ENCODE measurements at regions of chr10 and their contacts with region 1.

Region 1: GRCh38 chr10:25725918-25726716 is 207.9 kb upstream of the MYO3A start:
- DNase-seq: peak; percentile 33
- ATAC-seq: peak; percentile 76
- H3K4me3 ChIP-seq: no peak overlapping the region
- H3K27ac ChIP-seq: no peak overlapping the region
- H3K4me1 ChIP-seq: no peaks in the 10 kb centered on the region
- H3K27me3 ChIP-seq: no peaks in the 10 kb centered on the region
- CTCF ChIP-seq: peak; percentile 67

Region 2: DNA sequence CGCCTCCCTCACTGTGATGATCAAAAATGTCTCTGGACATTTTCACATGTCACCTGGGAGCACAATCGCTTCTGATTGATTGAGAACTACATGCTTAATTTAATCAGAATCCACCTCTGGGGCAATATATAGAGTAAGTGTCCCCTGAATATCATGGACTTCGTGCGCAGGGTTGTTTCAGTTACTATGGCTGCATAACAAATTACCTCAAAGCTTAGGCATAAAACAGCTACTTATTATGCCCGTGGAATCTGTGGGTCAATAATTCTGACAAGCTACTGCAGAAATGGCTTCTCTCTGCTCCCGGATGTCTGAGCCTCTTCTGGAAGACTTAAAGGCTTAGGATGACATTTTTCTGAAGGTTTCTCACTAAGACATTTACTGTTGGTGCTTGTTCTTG is 217.0 kb before region 1 on chr10:
- CTCF ChIA-PET with region 1: no interaction called
- POLR2A ChIA-PET with region 1: no interaction called
- in situ Hi-C with region 1: no loop called
- intact Hi-C with region 1: no loop called
- DNase-seq: no peak
- ATAC-seq: no peak
- H3K4me3 ChIP-seq: no peak overlapping the region
- H3K27ac ChIP-seq: no peak overlapping the region
- H3K4me1 ChIP-seq: no peaks in the 10 kb centered on the region
- H3K27me3 ChIP-seq: no peaks in the 10 kb centered on the region
- CTCF ChIP-seq: no peak

Region 3: DNA sequence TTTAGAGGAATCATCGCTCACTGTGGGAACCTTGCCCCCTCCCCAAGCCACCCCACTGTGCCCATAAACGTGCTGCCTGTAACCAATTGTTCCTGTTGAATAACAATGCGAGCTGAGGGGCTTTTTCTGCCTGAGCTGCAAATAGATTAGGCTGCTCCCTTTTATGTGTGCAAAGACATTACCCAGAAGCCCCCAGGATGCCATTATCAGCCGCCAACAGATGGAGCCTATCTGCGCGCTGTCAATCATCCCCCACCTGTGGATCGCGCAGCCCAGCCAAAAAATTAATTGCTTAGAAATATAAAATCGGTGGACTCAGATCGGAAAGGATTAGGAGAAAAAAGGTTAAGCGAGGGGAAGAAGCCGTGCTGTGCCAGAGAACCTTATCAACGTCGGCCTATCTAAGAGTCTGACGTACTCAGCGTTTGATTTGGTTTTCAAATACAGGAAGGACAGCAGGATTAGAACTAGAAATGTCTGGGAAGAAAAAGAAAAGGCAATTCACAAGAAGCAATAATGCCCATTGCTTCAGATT is 40.6 kb after region 1 on chr10:
- CTCF ChIA-PET with region 1: no interaction called
- POLR2A ChIA-PET with region 1: no interaction called
- in situ Hi-C with region 1: no loop called
- intact Hi-C with region 1: no loop called
- DNase-seq: no peak
- ATAC-seq: no peak
- H3K4me3 ChIP-seq: no peak overlapping the region
- H3K27ac ChIP-seq: no peak overlapping the region
- H3K4me1 ChIP-seq: no peaks in the 10 kb centered on the region
- H3K27me3 ChIP-seq: no peaks in the 10 kb centered on the region
- CTCF ChIP-seq: no peak

Region 4: DNA sequence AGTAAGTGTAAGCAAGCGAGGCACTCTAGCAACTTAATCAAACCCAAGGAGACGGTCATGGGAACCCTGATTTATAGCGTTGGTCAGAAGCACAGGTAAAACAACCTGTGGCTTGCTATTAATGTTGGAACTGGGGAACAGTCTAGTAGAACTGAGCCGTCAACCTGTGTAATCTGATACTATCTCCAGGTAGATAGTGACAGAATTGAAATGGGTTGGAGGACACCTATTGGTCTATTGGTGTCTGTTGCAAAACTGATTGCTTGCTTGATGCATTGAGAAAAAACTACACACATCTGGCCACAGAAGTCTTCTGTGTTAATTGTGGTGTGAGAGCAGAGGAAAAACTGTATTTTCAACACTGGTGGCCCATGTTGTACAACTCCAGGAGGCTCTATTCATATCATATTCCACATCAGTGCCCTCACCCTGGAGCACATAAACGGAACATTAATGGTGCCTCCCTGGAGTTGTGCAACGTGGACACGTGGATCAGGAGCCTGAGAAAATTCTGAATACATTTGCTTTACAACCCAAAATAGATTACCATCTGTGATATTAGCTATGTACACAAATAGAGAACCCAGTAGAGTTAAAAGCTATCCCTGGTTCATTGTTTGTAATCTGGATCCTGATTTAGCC is 320.1 kb after region 1 on chr10:
- CTCF ChIA-PET with region 1: no interaction called
- POLR2A ChIA-PET with region 1: no interaction called
- in situ Hi-C with region 1: no loop called
- intact Hi-C with region 1: no loop called
- DNase-seq: no peak
- ATAC-seq: no peak
- H3K4me3 ChIP-seq: no peak overlapping the region
- H3K27ac ChIP-seq: no peak overlapping the region
- H3K4me1 ChIP-seq: no peaks in the 10 kb centered on the region
- H3K27me3 ChIP-seq: no peaks in the 10 kb centered on the region
- CTCF ChIP-seq: no peak

Region 5: GRCh38 chr10:26269754-26270153 is 543.6 kb after region 1 on chr10:
- CTCF ChIA-PET with region 1: no interaction called
- POLR2A ChIA-PET with region 1: no interaction called
- in situ Hi-C with region 1: no loop called
- intact Hi-C with region 1: loop called (anchors 5 kb)
- DNase-seq: peak; percentile 13
- ATAC-seq: peak; percentile 77
- H3K4me3 ChIP-seq: no peak overlapping the region
- H3K27ac ChIP-seq: no peak overlapping the region
- H3K4me1 ChIP-seq: peaks cover 3% of the 10 kb centered on the region; the same call in 1 of the 2 replicates
- H3K27me3 ChIP-seq: no peaks in the 10 kb centered on the region
- CTCF ChIP-seq: peak; percentile 38; the same call in 1 of the 2 replicates

Region 6: GRCh38 chr10:26556748-26557640 is 830.9 kb after region 1 on chr10:
- CTCF ChIA-PET with region 1: no interaction called
- POLR2A ChIA-PET with region 1: no interaction called
- in situ Hi-C with region 1: no loop called
- intact Hi-C with region 1: loop called (anchors 2 kb)
- DNase-seq: peak; percentile 51
- ATAC-seq: 0 out of 2 replicates have a peak, but pooled peaks have one; percentile 62
- H3K4me3 ChIP-seq: no peak overlapping the region
- H3K27ac ChIP-seq: no peak overlapping the region
- H3K4me1 ChIP-seq: no peaks in the 10 kb centered on the region; the same call in 1 of the 2 replicates
- H3K27me3 ChIP-seq: no peaks in the 10 kb centered on the region
- CTCF ChIP-seq: peak; percentile 82

Measured in Panc1 (cell line).